K562 (cell line): ENCODE measurements at regions of chr19 and their contacts with region 1.

Region 1: DNA sequence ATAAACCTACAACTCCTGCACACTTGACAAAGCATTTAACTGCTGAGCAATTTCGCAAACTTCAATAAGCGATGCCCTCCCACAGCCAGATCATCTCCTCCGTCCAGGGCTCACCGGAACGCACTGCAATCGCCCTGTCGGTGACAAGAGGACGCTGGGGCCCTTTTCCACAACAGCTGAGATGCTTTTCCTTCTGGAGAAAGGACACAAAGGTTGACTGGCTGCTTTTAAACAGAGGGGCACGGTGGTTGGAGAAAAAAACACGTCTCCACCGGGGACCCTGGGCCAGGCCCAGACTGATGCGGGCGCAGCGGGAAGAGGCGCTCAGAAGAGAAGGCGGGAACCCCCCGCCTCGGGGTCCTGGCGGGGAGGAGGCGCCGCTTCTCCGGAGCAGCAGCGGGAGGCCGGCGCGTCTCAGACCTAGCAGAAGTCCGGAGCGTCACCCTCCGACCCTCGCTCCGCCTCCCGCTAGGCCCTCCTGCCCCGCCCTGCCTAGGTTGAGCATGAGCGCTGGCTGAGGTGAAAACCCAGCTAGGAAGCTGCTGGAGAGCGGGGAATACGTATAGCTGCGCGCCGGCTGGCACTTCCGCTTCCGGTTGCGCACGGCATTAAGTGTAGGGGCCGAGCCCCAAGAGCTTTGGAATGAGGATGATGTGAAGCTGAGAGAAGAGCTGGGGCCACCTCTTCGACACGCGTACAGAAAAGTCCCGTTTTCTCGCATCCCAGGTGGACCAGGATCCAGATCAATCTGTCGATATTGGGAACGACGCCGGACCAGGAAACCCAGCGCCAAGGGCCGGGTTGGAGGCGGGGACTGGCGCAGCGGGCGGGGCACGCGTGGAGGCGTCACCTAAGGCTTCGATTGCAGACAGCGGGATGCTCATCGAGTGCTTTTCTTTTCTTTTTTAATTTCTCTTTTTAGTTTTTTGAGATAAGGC is at the start of gene ZNF846:
- DNase-seq: peak; percentile 91 to 98 (median 92)
- ATAC-seq: peak; percentile 100
- H3K4me3 ChIP-seq: peak within 1 kb of the TSS; percentile 60
- H3K27ac ChIP-seq: peak within 1 kb of the TSS; percentile 89
- H3K4me1 ChIP-seq: peaks cover 0 to 20% of the 10 kb centered on the region in 2 experiments; a peak in 2 of 5 replicates
- H3K27me3 ChIP-seq: no peaks in the 10 kb centered on the region
- CTCF ChIP-seq: no peak
- EP300 ChIP-seq: peak; percentile 44
- POLR2A ChIP-seq: peak; percentile 87
- RAD21 ChIP-seq: peak; percentile 20 to 32; a peak in 2 of 4 replicates
- polyA plus RNA-seq, gene ZNF846: 4.1 to 4.5 TPM

Region 2: DNA sequence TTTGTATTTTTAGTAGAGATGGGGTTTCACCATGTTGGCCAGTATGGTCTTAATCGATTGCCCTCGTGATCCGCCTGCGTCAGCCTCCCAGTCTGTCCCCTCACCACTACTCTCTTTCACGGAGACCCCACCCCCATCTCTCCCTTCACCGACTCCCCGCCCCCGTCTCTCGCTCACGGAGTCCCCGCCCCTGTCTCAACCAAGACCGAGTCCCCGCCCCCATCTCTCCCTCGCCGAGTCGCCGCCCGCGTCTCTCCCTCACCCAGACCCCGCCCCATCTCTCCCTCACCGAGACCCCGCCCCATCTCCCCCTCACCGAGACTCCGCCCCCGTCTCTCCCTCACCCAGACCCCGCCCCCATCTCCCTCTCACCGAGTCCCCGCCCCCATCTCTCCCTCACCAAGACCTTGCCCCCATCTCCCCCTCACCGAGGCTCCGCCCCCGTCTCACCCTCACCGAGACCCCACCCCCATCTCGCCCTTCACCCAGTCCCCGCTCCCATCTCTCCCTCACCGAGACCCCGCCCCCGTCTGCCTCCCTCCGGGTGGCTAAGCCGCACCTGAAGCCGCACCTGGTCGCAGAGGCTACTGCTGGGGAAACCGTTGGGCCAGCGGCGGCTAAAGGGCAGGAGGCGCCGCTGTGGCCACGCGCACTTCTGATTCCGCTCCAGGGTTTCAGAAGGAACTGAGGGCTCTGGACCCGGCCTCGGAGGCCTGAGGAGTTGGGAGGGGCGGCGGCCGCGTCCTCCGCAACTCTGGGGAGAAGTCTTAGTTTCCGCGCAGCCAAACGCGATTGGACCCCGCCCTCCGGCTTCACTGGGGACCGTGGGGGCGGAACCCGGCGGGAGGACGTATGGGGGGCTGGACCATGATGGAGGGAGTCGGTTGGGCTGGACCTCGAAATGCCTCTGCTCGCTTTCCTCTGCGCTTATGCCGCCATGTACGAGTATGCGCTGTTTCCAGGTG is 17.2 kb after region 1 on chr19:
- CTCF ChIA-PET with region 1: no interaction called
- POLR2A ChIA-PET with region 1: no interaction called
- in situ Hi-C with region 1: no loop called
- intact Hi-C with region 1: loop called (anchors 1 kb)
- DNase-seq: peak; percentile 96 to 98 (median 97)
- ATAC-seq: peak; percentile 84
- H3K4me3 ChIP-seq: peak overlapping the region; percentile 88
- H3K27ac ChIP-seq: peak overlapping the region; percentile 96
- H3K4me1 ChIP-seq: peaks cover 40 to 49% of the 10 kb centered on the region in 2 experiments
- H3K27me3 ChIP-seq: no peaks in the 10 kb centered on the region
- CTCF ChIP-seq: peak in 1 of 3 experiments; percentile 3; a peak in 1 of 6 replicates
- EP300 ChIP-seq: no peak; the same call in 1 of the 2 replicates
- POLR2A ChIP-seq: peak; percentile 93
- RAD21 ChIP-seq: peak in 1 of 2 experiments; percentile 10; a peak in 1 of 4 replicates

Region 3: GRCh38 chr19:9818734-9819589 is 50.5 kb after region 1 on chr19 and contains the start of gene FBXL12:
- CTCF ChIA-PET with region 1: no interaction called
- POLR2A ChIA-PET with region 1: no interaction called
- in situ Hi-C with region 1: no loop called
- intact Hi-C with region 1: no loop called
- DNase-seq: peak; percentile 93 to 100 (median 95)
- ATAC-seq: peak; percentile 94
- H3K4me3 ChIP-seq: peak within 1 kb of the TSS; percentile 100
- H3K27ac ChIP-seq: peak within 1 kb of the TSS; percentile 87
- H3K4me1 ChIP-seq: peaks cover 14 to 19% of the 10 kb centered on the region in 2 experiments; a peak in 4 of 5 replicates
- H3K27me3 ChIP-seq: no peaks in the 10 kb centered on the region
- CTCF ChIP-seq: no peak; a peak in 1 of 6 replicates
- EP300 ChIP-seq: no peak
- POLR2A ChIP-seq: peak; percentile 97
- RAD21 ChIP-seq: no peak
- polyA plus RNA-seq, gene FBXL12: 2.7 to 3.9 TPM